BJ (cell line): ENCODE measurements at regions of chr21 and their contacts with region 1.

Region 1: GRCh38 chr21:42324896-42325295 is 9.7 kb upstream of the TFF3 start:
- DNase-seq: no peak
- H3K4me3 ChIP-seq: no peak overlapping the region
- H3K27me3 ChIP-seq: peaks cover 2% of the 10 kb centered on the region
- CTCF ChIP-seq: no peak

Region 2: GRCh38 chr21:42309753-42310221 is 15.1 kb before region 1 on chr21:
- CTCF ChIA-PET with region 1: interaction called, 19 read pairs
- POLR2A ChIA-PET with region 1: no interaction called
- DNase-seq: no peak
- H3K4me3 ChIP-seq: no peak overlapping the region
- H3K27me3 ChIP-seq: peaks cover 5% of the 10 kb centered on the region; the same call in 1 of the 2 replicates
- CTCF ChIP-seq: peak; percentile 69